Keratinocyte (primary cell): ENCODE measurements at regions of chr2 and their contacts with region 1.

Region 1: DNA sequence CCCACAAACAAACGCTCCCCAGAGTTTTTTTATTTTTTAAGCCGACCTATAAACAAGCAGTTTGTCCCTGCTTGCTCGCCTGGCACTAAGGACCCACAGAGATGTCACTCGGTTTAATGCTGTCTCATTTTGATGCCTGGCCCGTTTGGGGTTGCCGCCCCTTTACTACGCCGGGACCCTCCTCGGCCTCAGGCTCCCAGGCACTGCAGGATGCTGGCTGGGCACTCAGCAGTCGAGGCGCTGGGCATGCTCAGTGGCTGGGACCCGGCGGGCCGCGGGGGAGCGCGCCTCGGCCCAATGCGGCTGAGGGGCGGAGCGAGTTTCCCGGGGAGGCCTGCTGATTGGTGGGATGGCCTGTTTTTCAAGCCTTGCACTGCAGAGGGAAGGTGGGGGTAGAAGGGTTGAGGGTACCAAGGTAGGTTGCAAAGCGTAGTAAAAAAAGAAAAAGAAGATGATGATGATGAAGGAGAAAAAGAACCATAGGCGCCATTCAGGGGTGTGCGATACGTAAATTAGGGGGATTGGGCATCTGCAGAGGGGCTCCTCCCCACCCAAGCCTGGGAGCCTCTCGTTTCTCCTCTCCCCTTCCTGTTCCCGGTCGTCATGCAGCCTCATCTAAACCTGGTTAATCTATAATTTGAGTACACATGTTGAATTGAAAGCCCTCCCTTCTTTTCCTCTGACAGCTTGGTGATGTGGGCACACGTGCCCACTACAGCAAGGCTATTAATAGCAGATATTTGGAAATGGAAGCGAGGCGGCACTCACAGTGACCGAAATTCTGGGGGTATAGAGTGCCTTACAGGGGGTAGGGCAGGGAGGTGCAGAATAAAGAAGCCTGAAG is 1.5 kb upstream of the IRS1 start:
- DNase-seq: no peak
- H3K4me3 ChIP-seq: peak overlapping the region in 1 of 3 experiments; percentile 7
- H3K27ac ChIP-seq: peak overlapping the region; percentile 74
- H3K4me1 ChIP-seq: peaks cover 25% of the 10 kb centered on the region
- H3K27me3 ChIP-seq: no peaks in the 10 kb centered on the region
- CTCF ChIP-seq: no peak

Region 2: DNA sequence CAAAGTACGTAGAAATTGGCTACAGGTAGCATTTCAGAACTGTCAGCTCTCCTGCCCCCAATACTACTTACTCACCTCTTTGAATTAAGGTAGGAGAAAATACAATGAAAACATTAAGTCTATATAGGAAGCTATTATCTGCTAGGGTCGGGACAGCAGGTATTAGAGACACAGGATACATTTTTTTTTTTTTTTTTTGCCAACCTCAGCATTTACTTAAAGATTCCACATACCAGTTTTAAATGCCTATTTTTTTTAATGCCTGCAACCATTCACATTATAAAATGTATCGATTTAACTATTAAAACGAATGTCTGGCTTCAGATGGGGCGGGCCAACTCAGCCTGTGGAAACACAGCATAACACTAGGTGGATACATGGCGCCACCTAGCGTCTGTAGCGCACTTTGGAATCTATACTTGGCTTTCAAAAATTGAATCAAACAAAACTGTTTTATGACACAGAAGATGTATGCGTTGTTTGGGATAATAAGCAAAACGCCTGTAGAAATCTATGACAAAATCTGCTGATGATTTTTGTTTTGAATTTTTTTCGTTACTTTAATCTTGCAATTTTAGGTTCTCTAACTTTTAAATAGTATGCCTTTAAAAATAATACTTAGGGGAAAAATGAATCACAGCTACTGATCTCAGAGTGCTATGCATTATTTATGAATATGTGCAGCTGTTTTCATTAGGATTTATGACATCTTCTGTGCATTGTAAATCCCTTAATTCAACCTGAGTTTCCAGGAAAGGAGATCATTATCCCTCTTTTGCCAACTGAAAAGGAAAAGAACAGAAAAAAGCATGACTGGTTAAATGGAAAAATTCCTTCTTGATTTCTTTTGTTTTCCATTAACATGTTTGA is 1140.7 kb before region 1 on chr2:
- dilution Hi-C with region 1: loop called (anchors 25 kb)
- DNase-seq: no peak
- H3K4me3 ChIP-seq: no peak overlapping the region
- H3K27ac ChIP-seq: no peak overlapping the region
- H3K4me1 ChIP-seq: no peaks in the 10 kb centered on the region
- H3K27me3 ChIP-seq: no peaks in the 10 kb centered on the region
- CTCF ChIP-seq: peak; percentile 76 to 88 (median 83)